ENCODE measurements at regions of chr2 and their contacts with region 1.

Region 1: DNA sequence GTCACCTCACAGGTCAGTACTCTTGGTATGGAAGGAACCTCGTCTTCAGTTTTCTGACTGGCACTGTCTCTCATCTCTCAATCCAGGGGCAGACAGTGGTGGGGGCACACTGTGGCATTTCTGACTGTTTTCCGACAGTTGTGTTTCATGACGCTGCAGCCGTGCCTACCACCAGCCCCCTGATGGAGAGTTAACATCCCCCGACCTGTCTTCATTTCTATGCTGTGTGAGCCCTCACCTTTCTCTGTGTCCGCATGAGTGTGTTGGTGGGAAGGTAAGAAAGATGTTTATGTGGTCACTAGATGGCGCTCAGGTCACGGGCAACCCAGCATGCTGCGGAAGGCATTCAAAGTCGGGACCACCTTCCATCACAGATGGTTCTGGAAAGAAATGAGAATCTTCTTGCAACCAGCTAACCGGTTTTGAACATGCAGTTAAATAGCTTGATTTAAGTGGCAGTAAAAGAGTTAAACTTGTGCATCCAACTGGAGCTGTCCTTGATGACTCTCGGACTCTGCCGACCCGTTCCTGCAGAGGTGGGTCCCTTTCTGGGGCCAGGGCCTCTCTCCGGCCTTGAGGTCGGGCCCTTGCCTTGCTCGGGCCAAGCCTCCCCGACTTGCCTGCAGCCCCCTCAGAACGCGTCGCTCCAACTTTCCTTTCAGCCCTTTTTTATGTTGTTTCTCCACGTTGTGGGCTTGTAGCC is 92.4 kb downstream of the DYSF start:
- DNase-seq: peak in 7 of 9 donors; percentile 18 to 44 (median 37)
- ATAC-seq: peak; percentile 64
- H3K4me3 ChIP-seq: peak overlapping the region; percentile 51
- H3K4me3 Mint-ChIP-seq: peak overlapping the region; percentile 54 to 83 (median 68)
- H3K27ac ChIP-seq: no peak overlapping the region
- H3K27ac Mint-ChIP-seq: no peak overlapping the region
- H3K4me1 ChIP-seq: peaks cover 0 to 9% of the 10 kb centered on the region in 2 donors
- H3K4me1 Mint-ChIP-seq: peaks cover 5 to 15% (median 12%) of the 10 kb centered on the region in 7 donors
- H3K27me3 ChIP-seq: no peaks in the 10 kb centered on the region
- H3K27me3 Mint-ChIP-seq: peaks cover 10 to 24% (median 20%) of the 10 kb centered on the region in 5 donors

Region 2: DNA sequence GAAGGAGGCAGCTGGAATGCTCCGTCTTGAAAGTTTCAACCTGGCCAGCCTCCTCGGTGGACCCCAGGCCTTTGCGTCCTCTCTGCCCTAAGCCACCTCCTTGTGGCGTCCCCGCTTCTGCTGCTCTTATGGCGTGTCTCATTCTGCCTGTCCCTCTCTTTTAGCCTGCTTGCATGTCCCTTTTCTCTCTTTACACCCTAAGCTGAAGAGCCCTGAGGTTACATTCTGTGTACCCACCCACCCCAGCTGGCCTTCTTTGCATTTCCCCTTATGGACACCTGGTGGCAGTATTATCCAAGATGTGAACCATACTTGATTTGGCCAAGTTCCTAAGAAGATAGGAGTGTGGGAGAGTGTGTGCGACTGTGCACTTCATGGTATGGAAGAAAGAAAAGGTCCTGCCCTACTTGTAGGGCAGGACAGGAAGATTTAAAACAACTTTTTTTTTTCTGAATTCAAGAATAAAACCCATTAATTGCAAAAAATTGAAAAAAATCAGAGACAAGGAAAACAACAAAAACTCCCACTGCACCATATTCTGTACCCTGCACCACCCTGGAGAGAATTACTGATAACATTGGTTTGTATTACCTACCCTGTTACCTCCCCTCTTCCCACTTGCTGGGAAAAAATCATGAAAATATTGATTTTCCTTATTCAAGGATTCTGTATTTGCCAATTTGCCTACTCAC is 14.9 kb before region 1 on chr2:
- CTCF ChIA-PET with region 1: no interaction called
- POLR2A ChIA-PET with region 1: no interaction called
- intact Hi-C with region 1: no loop called
- DNase-seq: no peak
- ATAC-seq: peak; percentile 54
- H3K4me3 ChIP-seq: no peak overlapping the region
- H3K4me3 Mint-ChIP-seq: no peak overlapping the region
- H3K27ac ChIP-seq: no peak overlapping the region
- H3K27ac Mint-ChIP-seq: no peak overlapping the region
- H3K4me1 ChIP-seq: no peaks in the 10 kb centered on the region
- H3K4me1 Mint-ChIP-seq: peaks cover 0 to 5% (median 0%) of the 10 kb centered on the region in 7 donors
- H3K27me3 ChIP-seq: no peaks in the 10 kb centered on the region
- H3K27me3 Mint-ChIP-seq: peaks cover 8 to 66% (median 42%) of the 10 kb centered on the region in 5 donors

Region 3: DNA sequence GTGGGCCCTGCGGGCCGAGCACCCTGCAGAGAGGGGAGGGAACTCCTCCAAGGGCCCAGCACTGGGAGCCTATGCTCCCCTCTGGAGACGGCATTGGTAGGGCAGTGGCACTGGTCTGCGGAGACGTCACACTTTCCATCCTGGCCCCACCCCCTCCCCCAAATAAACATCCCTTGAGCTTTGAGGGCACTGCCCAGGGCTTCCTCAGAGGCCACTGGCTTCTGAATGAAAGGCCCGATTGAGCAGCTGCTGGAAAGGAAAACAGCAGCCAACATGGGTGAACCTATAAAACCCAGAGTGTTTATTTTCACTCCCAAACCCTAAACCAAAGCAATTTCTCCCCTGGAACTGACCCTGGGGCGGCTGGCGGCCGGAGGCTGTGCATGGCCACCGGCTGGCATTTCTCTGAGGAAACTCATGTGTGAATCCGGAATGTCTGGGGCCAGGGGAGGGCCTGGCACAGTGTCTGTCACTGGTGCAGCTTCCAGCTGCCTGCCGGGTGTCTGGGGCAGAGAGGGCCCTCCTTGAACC is 46.5 kb after region 1 on chr2:
- CTCF ChIA-PET with region 1: no interaction called
- POLR2A ChIA-PET with region 1: no interaction called
- intact Hi-C with region 1: no loop called
- DNase-seq: no peak
- ATAC-seq: no peak
- H3K4me3 ChIP-seq: no peak overlapping the region
- H3K4me3 Mint-ChIP-seq: no peak overlapping the region
- H3K27ac ChIP-seq: no peak overlapping the region
- H3K27ac Mint-ChIP-seq: no peak overlapping the region
- H3K4me1 ChIP-seq: no peaks in the 10 kb centered on the region
- H3K4me1 Mint-ChIP-seq: no peaks in the 10 kb centered on the region
- H3K27me3 ChIP-seq: no peaks in the 10 kb centered on the region
- H3K27me3 Mint-ChIP-seq: no peaks in the 10 kb centered on the region

Region 4: DNA sequence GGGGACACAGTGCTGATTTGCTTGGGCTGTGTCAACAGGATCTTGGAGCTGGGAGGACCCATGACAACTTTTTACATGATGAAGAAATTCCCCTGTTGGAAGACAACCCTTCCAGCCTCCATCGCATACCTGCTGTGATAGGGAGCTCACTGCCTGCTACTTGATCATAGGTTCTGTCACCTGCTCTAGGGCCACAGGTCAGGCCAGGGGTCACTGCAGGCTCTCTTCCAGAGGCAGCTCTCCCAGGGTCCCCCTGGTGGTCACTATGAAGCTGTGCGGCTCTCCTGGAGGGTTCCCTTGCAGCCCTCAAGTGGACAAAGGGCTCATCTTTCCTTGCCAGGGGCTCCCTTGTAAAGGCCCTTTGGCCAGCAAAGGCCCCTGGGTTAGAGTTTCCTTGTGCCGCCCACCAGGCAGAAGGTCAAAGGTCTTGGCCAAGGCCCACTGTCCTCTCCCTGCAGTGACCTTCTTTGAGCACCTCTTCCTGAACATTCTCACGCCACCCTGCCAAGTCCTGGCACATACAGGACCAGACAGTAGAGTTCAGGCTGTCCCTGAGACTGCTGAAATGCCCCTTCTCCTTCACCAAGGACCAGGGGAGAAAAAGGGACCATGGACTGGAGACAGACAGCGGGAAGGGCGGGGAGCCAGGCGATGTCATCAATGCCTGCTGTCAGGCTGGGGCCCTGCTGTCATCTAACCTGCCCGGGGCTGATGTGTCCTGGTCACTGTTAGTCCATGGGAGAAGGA is 252.7 kb after region 1 on chr2:
- CTCF ChIA-PET with region 1: no interaction called
- POLR2A ChIA-PET with region 1: no interaction called
- intact Hi-C with region 1: loop called in 1 of 2 experiments (anchors 1 kb)
- DNase-seq: no peak
- ATAC-seq: no peak
- H3K4me3 ChIP-seq: no peak overlapping the region
- H3K4me3 Mint-ChIP-seq: no peak overlapping the region
- H3K27ac ChIP-seq: no peak overlapping the region
- H3K27ac Mint-ChIP-seq: no peak overlapping the region
- H3K4me1 ChIP-seq: no peaks in the 10 kb centered on the region
- H3K4me1 Mint-ChIP-seq: no peaks in the 10 kb centered on the region
- H3K27me3 ChIP-seq: no peaks in the 10 kb centered on the region
- H3K27me3 Mint-ChIP-seq: peaks cover 0 to 14% (median 9%) of the 10 kb centered on the region in 5 donors

Region 5: GRCh38 chr2:72137498-72138010 is 591.8 kb after region 1 on chr2:
- CTCF ChIA-PET with region 1: no interaction called
- POLR2A ChIA-PET with region 1: no interaction called
- intact Hi-C with region 1: loop called in 1 of 2 experiments (anchors 5 kb)
- DNase-seq: peak in 8 of 9 donors; percentile 27 to 64 (median 38)
- ATAC-seq: peak; percentile 55
- H3K4me3 ChIP-seq: no peak overlapping the region
- H3K4me3 Mint-ChIP-seq: no peak overlapping the region
- H3K27ac ChIP-seq: no peak overlapping the region
- H3K27ac Mint-ChIP-seq: no peak overlapping the region
- H3K4me1 ChIP-seq: no peaks in the 10 kb centered on the region
- H3K4me1 Mint-ChIP-seq: peaks cover 0 to 2% (median 0%) of the 10 kb centered on the region in 7 donors
- H3K27me3 ChIP-seq: no peaks in the 10 kb centered on the region
- H3K27me3 Mint-ChIP-seq: peaks cover 5 to 14% (median 6%) of the 10 kb centered on the region in 5 donors

Region 6: DNA sequence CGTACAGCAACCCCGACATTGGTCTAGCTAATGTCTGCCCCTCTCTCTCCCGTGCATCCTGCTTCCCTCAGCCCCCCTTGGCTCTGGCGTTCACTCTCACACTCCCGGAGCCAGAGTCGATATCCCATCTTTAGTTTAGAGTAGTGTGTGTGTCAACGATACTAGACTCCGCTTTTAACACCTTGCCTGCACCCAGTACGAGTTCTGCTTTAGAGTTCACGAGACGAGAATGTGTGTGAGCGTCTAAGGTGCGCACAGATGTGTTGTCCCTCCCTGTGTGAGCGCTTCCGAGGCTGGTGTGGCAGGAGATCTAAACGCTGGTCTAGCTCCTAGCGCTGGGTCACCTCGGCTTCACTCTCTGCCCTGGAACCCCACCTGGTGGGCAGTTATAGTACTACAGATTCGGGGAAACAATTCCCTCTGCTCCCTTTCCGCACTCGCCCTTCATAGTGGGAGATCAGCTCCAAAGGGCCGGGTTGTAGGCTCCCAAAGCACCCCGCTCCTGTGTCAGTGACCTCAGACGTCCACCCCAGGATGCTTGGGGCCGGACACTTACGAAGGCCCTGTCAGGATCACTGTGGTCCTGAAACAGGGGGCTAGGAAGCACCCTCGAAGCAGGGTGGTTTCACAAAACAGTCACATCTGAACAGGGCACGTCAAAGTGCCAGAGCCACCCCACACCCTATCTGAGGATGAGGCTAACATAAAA is 604.6 kb after region 1 on chr2:
- CTCF ChIA-PET with region 1: interaction called, 5 read pairs
- POLR2A ChIA-PET with region 1: no interaction called
- intact Hi-C with region 1: loop called (anchors 1 kb)
- DNase-seq: peak in 7 of 9 donors; percentile 26 to 64 (median 53)
- ATAC-seq: peak; percentile 74
- H3K4me3 ChIP-seq: peak overlapping the region; percentile 64
- H3K4me3 Mint-ChIP-seq: peak overlapping the region; percentile 64 to 89 (median 78)
- H3K27ac ChIP-seq: no peak overlapping the region
- H3K27ac Mint-ChIP-seq: peak overlapping the region in 2 of 9 donors; percentile 7 to 54
- H3K4me1 ChIP-seq: peaks cover 4 to 12% of the 10 kb centered on the region in 2 donors
- H3K4me1 Mint-ChIP-seq: peaks cover 29 to 43% (median 36%) of the 10 kb centered on the region in 7 donors
- H3K27me3 ChIP-seq: peaks cover 6 to 22% of the 10 kb centered on the region in 2 donors
- H3K27me3 Mint-ChIP-seq: peaks cover 59 to 73% (median 67%) of the 10 kb centered on the region in 5 donors

Region 7: GRCh38 chr2:72579591-72580180 is 1034.0 kb after region 1 on chr2:
- CTCF ChIA-PET with region 1: interaction called, 3 read pairs
- POLR2A ChIA-PET with region 1: no interaction called
- intact Hi-C with region 1: loop called in 1 of 2 experiments (anchors 1 kb)
- DNase-seq: peak in 6 of 9 donors; percentile 0 to 32 (median 10)
- ATAC-seq: no peak
- H3K4me3 ChIP-seq: no peak overlapping the region
- H3K4me3 Mint-ChIP-seq: no peak overlapping the region
- H3K27ac ChIP-seq: no peak overlapping the region
- H3K27ac Mint-ChIP-seq: no peak overlapping the region
- H3K4me1 ChIP-seq: no peaks in the 10 kb centered on the region
- H3K4me1 Mint-ChIP-seq: peaks cover 0 to 8% (median 0%) of the 10 kb centered on the region in 7 donors
- H3K27me3 ChIP-seq: no peaks in the 10 kb centered on the region
- H3K27me3 Mint-ChIP-seq: peaks cover 0 to 3% (median 0%) of the 10 kb centered on the region in 5 donors

Region 8: GRCh38 chr2:72745679-72746368 is 1200.1 kb after region 1 on chr2:
- CTCF ChIA-PET with region 1: no interaction called
- POLR2A ChIA-PET with region 1: no interaction called
- intact Hi-C with region 1: loop called (anchors 1 to 2 kb)
- DNase-seq: peak in 5 of 9 donors; percentile 14 to 39 (median 26)
- ATAC-seq: no peak
- H3K4me3 ChIP-seq: no peak overlapping the region
- H3K4me3 Mint-ChIP-seq: no peak overlapping the region
- H3K27ac ChIP-seq: no peak overlapping the region
- H3K27ac Mint-ChIP-seq: no peak overlapping the region
- H3K4me1 ChIP-seq: no peaks in the 10 kb centered on the region
- H3K4me1 Mint-ChIP-seq: no peaks in the 10 kb centered on the region
- H3K27me3 ChIP-seq: no peaks in the 10 kb centered on the region
- H3K27me3 Mint-ChIP-seq: no peaks in the 10 kb centered on the region

Region 9: DNA sequence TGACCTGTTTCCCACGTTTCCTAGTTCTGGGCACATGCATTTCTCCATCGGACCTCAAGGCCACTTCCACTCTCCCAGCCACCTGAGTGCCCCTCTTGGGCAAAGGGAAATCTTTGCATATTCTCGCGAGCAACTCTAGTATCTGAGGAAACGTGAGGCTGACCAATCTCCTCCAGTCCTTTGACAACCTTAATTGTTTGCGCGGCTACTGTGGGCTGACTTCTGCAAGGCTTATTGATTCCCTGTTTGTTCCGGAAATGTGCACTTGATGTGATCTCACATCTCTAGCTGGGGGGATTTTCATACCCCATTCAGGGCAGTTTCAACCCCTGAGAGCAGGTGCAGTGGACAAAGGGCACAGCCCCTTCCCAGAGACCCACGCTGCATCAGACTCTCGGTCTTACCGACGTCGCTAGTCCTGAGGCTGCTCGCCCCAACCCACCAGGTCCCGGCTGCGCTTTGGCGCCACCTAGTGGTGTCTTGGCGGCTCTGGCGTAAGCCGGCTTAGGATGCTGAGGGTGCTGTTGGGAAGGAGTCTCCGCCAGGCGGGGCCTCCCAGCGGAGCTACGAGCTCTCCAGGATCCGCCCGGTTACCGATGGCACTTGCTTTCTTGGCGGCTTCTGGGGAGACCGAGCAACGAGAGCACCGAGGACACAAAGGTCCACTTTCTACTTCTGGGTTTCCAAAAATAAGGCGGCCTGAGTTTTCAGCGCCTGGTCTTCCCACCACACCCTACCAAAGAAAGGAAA is 1316.7 kb after region 1 on chr2:
- CTCF ChIA-PET with region 1: no interaction called
- POLR2A ChIA-PET with region 1: no interaction called
- intact Hi-C with region 1: loop called in 1 of 2 experiments (anchors 2 kb)
- DNase-seq: peak; percentile 63 to 91 (median 83)
- ATAC-seq: peak; percentile 97
- H3K4me3 ChIP-seq: no peak overlapping the region
- H3K4me3 Mint-ChIP-seq: peak overlapping the region; percentile 27 to 80 (median 69)
- H3K27ac ChIP-seq: no peak overlapping the region
- H3K27ac Mint-ChIP-seq: peak overlapping the region in 1 of 9 donors; percentile 49
- H3K4me1 ChIP-seq: peaks cover 4% of the 10 kb centered on the region in 2 donors
- H3K4me1 Mint-ChIP-seq: peaks cover 3 to 11% (median 8%) of the 10 kb centered on the region in 7 donors
- H3K27me3 ChIP-seq: peaks cover 4 to 5% of the 10 kb centered on the region in 2 donors
- H3K27me3 Mint-ChIP-seq: peaks cover 29 to 63% (median 61%) of the 10 kb centered on the region in 5 donors